ENCODE measurements at regions of chr7 and their contacts with region 1.

Region 1: DNA sequence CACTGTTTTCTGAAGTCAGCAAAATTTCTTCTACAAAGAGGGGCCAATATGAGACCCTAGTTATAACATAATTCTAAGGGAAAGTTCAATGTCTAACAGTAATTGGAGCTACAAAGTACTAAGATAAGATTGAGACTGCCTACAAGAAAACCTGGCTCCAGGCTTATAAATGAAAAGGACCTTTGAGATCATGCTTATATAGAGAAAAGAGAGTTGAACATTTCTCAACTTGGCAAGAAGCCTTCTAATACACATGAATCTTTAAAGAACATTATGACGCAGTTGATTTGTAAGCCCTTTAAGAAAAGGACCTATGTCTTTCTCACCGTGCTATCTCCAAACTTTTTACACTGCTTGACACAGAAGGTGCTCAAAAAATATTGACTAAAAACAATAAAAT is 87.9 kb downstream of the TPK1 start:
- DNase-seq: no peak
- ATAC-seq: no peak
- H3K4me3 ChIP-seq: no peak overlapping the region
- H3K4me3 Mint-ChIP-seq: no peak overlapping the region
- H3K27ac ChIP-seq: no peak overlapping the region
- H3K27ac Mint-ChIP-seq: no peak overlapping the region
- H3K4me1 ChIP-seq: no peaks in the 10 kb centered on the region
- H3K4me1 Mint-ChIP-seq: no peaks in the 10 kb centered on the region
- H3K27me3 ChIP-seq: no peaks in the 10 kb centered on the region
- H3K27me3 Mint-ChIP-seq: no peaks in the 10 kb centered on the region
- CTCF ChIP-seq: no peak

Region 2: GRCh38 chr7:144761493-144761892 is 13.6 kb after region 1 on chr7:
- CTCF ChIA-PET with region 1: no interaction called
- POLR2A ChIA-PET with region 1: no interaction called
- intact Hi-C with region 1: loop called in 1 of 2 experiments (anchors 1 kb)
- DNase-seq: no peak
- ATAC-seq: no peak
- H3K4me3 ChIP-seq: no peak overlapping the region
- H3K4me3 Mint-ChIP-seq: no peak overlapping the region
- H3K27ac ChIP-seq: no peak overlapping the region
- H3K27ac Mint-ChIP-seq: no peak overlapping the region
- H3K4me1 ChIP-seq: no peaks in the 10 kb centered on the region
- H3K4me1 Mint-ChIP-seq: no peaks in the 10 kb centered on the region
- H3K27me3 ChIP-seq: no peaks in the 10 kb centered on the region
- H3K27me3 Mint-ChIP-seq: no peaks in the 10 kb centered on the region
- CTCF ChIP-seq: no peak

Region 3: DNA sequence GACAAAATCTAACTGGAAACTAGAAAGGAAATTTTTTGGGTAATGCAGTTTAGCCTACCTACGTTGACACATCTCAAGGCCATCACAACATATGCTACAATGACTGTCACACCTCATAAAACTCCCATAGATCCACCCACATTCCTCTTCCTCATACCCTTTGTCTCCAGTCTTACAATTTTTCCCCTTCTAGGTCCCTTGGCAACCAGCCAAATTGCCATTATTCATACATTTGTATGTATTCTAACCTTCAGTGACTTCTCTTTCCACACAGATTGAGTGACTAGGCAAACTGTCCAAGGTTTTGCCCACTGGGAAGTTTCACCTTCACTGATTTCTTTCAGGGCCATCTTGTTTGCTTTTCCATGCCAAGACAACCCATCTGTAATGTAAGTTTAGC is 188.4 kb after region 1 on chr7:
- CTCF ChIA-PET with region 1: no interaction called
- POLR2A ChIA-PET with region 1: no interaction called
- intact Hi-C with region 1: no loop called
- DNase-seq: no peak
- ATAC-seq: no peak
- H3K4me3 ChIP-seq: no peak overlapping the region
- H3K4me3 Mint-ChIP-seq: no peak overlapping the region
- H3K27ac ChIP-seq: no peak overlapping the region
- H3K27ac Mint-ChIP-seq: no peak overlapping the region
- H3K4me1 ChIP-seq: no peaks in the 10 kb centered on the region
- H3K4me1 Mint-ChIP-seq: no peaks in the 10 kb centered on the region
- H3K27me3 ChIP-seq: no peaks in the 10 kb centered on the region
- H3K27me3 Mint-ChIP-seq: no peaks in the 10 kb centered on the region
- CTCF ChIP-seq: no peak